Body of pancreas (tissue), 4 donors: ENCODE measurements at regions of chr4 and their contacts with region 1.

Region 1: DNA sequence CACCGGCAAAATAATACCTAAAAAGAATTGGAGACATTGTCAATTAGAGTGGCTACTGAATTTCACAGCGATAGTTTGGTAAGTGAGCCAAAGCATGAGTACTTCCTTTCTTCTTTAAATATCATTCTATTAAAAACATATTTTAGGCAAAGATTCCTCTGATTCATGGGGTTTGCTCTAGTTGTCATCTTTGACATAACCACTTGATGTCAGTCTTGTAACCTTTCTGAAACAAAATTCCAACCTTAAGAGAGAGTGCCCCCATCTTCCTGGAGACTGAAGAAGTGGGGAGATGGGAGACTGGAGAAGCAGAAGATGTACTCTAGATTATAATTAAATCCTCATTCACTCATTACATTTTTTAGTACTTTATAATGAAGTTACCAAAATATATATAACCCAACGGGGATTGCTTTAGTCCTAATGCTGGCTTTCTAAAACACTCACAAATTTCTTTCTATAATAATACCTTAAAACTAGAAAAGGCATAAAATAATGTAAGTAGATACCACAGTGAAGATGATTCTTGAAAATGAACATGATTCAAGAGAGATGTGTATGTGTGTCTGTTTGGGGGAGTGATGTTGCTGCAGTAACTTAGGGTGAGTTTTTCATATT is 96.4 kb downstream of the EMCN start:
- DNase-seq: no peak
- ATAC-seq: no peak
- H3K4me3 ChIP-seq: no peak overlapping the region
- H3K27ac ChIP-seq: no peak overlapping the region
- H3K4me1 ChIP-seq: no peaks in the 10 kb centered on the region
- H3K27me3 ChIP-seq: no peaks in the 10 kb centered on the region
- CTCF ChIP-seq: peak in 6 of 7 experiments; percentile 32 to 63 (median 52)
- POLR2A ChIP-seq: no peak

Region 2: GRCh38 chr4:100060765-100061416 is 360.6 kb before region 1 on chr4:
- intact Hi-C with region 1: no loop called
- DNase-seq: no peak
- ATAC-seq: no peak
- H3K4me3 ChIP-seq: no peak overlapping the region
- H3K27ac ChIP-seq: no peak overlapping the region
- H3K4me1 ChIP-seq: no peaks in the 10 kb centered on the region
- H3K27me3 ChIP-seq: no peaks in the 10 kb centered on the region
- CTCF ChIP-seq: no peak
- POLR2A ChIP-seq: no peak

Region 3: GRCh38 chr4:100742045-100742444 is 320.6 kb after region 1 on chr4:
- intact Hi-C with region 1: loop called (anchors 10 kb)
- DNase-seq: peak in 1 of 4 donors; percentile 16
- ATAC-seq: peak; percentile 58
- H3K4me3 ChIP-seq: no peak overlapping the region
- H3K27ac ChIP-seq: no peak overlapping the region
- H3K4me1 ChIP-seq: peaks cover under 1% of the 10 kb centered on the region
- H3K27me3 ChIP-seq: no peaks in the 10 kb centered on the region
- CTCF ChIP-seq: peak; percentile 30 to 68 (median 53)
- POLR2A ChIP-seq: no peak